ENCODE measurements at regions of chr20 and their contacts with region 1.

Region 1: DNA sequence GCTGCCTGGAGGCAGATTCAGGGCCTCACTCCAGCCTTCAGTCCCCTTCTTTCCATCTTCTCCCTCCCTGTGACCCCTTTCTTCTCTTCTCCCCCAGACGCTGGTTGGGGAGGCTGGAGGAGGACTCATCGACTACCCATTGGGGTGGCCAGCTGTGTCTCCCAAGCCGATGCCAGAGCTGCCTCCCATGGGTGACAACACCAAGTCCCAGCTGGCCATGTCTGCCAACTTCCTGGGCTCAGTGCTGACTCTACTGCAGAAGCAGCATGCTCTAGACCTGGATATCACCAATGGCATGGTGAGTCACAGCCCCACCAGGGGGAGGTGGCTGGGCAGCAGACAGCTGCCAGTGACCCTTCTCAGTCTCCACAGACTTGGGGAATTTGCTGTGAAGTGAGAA is 12.9 kb downstream of the BPIFB4 start:
- DNase-seq: no peak
- ATAC-seq: no peak

Region 2: DNA sequence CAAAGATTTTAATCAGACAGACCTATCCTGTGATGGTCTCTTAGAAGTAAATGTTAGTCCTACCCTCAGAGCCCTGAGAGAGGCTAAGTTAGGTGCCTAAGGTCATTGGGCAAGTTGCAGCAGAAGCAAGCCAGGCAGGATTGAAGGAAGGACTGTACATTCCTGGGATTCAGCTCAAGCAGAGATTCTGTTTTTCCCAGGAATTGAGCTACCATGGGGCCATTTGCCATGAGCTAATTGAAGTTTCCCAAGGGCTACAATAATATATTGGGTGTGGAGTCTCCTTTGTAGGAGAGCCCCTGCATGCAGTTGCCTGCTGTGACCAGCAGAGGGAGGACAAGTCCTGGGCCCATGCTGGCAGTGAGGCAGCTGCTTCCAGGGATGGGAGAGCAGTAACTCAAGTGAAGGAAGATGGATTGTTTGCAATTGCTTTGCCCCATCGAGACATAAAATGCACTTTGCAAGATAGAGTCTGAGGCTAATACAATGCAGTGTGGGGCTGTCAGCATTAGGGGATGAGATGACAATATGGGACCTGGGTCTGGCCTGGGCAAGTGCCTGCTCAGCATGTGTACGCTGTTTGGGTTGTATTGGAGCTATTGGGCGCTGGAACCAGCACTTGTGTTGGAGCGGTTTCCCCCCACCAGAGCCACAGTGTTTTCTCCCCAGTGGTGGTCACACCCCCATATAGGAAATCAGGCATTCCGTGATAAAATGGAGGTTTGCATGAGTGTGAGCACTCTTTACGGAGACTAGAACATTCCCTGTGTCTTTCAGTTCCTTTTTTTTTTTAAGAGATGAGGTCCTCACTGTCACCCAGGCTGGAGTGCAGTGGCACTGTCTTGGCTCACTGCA is 302.2 kb before region 1 on chr20:
- intact Hi-C with region 1: loop called (anchors 5 kb)
- DNase-seq: peak; percentile 78
- ATAC-seq: peak; percentile 93

Region 3: DNA sequence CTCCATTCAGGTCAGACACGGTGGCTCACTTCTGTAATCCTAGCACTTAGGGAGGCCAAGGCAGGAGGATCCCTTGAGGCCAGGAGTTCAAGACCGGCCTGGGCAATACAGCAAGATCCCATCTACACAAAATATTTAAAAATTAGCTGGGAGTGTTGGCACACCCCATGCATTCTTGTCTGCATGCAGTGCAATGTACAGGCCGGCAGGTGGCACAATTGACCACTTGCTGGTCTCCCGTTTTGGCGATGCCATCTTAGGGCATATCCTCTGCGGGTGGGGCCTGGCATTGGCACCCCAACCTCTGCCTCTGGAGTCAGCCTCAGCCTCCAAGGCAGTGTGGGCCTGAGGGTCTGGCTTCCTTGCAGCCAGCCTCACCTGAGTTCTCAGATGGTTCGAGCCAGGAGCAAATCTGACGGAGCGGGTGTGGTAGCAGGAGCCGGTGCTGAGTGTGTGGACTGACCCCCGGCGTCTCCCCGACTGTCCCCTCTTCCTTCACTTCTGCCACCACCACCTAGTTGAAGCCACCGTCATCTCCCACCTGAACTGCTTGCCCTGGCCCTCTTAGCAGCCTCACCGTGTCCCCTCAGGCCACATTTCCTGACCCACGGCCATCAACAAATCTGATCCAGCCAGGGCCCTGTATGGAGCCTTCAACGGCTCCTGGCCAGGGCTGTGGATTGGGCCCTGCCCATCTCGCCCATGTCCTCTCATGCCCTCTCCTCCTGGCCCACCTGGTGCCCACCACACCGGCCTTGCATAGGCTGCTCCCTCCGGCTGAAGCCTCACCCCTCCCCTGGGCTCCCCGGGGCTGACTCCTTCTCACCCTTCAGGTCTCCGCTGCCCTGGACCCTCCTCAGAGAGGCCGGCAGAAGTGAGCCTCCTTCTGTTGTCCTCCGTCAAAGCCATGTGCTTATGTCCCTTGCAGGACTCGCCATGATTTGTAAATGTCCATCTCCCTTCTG is 189.6 kb before region 1 on chr20:
- intact Hi-C with region 1: loop called (anchors 2 kb)
- DNase-seq: peak; percentile 65
- ATAC-seq: peak; percentile 82